OCI-LY7 (cell line): ENCODE measurements at regions of chr11 and their contacts with region 1.

Region 1: GRCh38 chr11:74988541-74989260 is at the start of gene NEU3:
- DNase-seq: peak; percentile 92
- H3K4me3 ChIP-seq: peak within 1 kb of the TSS; percentile 94
- H3K27ac ChIP-seq: peak within 1 kb of the TSS; percentile 86
- H3K4me1 ChIP-seq: peaks cover 44% of the 10 kb centered on the region
- CTCF ChIP-seq: no peak
- total RNA-seq, gene NEU3: 49.4 and 56.3 TPM in 2 replicates

Region 2: DNA sequence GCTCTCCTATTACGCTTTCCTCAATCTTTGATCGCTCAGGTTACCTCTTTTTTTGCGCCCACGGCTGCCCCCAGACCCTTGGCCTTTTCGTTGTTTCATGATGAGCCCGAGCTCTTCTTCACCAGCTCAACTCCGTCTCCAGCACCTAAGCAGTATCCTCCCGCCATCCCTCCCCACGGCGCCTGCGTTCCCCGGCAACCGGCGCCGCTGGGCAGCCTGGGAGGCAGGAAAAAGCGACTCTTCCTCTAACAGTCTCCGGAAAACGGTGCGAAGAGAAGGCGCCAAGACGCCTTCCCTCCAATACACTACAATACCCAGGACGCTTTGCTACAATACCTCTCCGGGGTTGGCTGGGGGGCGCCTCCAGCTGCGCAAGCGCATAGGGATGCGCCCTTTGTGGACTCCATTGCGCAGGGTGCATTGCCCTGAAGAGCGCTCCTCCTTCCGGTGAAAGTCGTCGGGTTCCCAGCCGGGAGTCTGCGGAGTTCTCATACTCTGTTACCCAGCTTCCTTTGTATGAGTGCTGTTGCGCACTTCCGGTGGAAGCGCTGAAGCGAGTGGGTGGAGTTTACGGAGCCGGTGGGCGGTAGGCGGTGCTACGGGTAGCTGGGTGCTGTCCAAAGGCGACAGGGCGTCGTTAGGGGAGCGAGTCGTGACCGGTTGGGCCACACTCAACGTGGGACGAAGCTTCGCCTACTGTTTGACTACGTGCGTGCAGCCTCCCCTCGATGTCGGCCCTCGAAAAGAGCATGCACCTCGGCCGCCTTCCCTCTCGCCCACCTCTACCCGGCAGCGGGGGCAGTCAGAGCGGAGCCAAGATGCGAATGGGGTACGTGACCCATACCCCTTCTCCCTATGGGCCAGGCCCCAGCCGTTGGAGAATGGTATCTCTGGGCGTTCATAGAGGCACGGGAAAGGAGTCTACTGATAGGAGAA is 817.7 kb before region 1 on chr11 and contains the starts of genes C2CD3 and PPME1:
- CTCF ChIA-PET with region 1: interaction called, 10 read pairs
- POLR2A ChIA-PET with region 1: no interaction called
- intact Hi-C with region 1: no loop called
- DNase-seq: peak; percentile 100
- H3K4me3 ChIP-seq: peak within 1 kb of the TSS; percentile 93
- H3K27ac ChIP-seq: peak within 1 kb of the TSS; percentile 75
- H3K4me1 ChIP-seq: peaks cover 30% of the 10 kb centered on the region
- CTCF ChIP-seq: 0 out of 2 replicates have a peak, but pooled peaks have one; percentile 33
- total RNA-seq, gene C2CD3: 24.9 and 29.2 TPM in 2 replicates
- total RNA-seq, gene PPME1: 17.3 and 28.8 TPM in 2 replicates

Region 3: GRCh38 chr11:74748211-74749127 is 240.2 kb before region 1 on chr11 and contains the start of gene RNF169:
- CTCF ChIA-PET with region 1: no interaction called
- POLR2A ChIA-PET with region 1: no interaction called
- intact Hi-C with region 1: no loop called
- DNase-seq: peak; percentile 98
- H3K4me3 ChIP-seq: peak within 1 kb of the TSS; percentile 75
- H3K27ac ChIP-seq: peak within 1 kb of the TSS; percentile 75
- H3K4me1 ChIP-seq: peaks cover 30% of the 10 kb centered on the region
- CTCF ChIP-seq: no peak
- total RNA-seq, gene RNF169: 16.4 and 16.9 TPM in 2 replicates

Region 4: GRCh38 chr11:74870485-74870884 is 118.2 kb before region 1 on chr11:
- CTCF ChIA-PET with region 1: no interaction called
- POLR2A ChIA-PET with region 1: no interaction called
- intact Hi-C with region 1: no loop called
- DNase-seq: peak; percentile 63
- H3K4me3 ChIP-seq: no peak overlapping the region
- H3K27ac ChIP-seq: no peak overlapping the region
- H3K4me1 ChIP-seq: no peaks in the 10 kb centered on the region
- CTCF ChIP-seq: peak; percentile 80

Region 5: DNA sequence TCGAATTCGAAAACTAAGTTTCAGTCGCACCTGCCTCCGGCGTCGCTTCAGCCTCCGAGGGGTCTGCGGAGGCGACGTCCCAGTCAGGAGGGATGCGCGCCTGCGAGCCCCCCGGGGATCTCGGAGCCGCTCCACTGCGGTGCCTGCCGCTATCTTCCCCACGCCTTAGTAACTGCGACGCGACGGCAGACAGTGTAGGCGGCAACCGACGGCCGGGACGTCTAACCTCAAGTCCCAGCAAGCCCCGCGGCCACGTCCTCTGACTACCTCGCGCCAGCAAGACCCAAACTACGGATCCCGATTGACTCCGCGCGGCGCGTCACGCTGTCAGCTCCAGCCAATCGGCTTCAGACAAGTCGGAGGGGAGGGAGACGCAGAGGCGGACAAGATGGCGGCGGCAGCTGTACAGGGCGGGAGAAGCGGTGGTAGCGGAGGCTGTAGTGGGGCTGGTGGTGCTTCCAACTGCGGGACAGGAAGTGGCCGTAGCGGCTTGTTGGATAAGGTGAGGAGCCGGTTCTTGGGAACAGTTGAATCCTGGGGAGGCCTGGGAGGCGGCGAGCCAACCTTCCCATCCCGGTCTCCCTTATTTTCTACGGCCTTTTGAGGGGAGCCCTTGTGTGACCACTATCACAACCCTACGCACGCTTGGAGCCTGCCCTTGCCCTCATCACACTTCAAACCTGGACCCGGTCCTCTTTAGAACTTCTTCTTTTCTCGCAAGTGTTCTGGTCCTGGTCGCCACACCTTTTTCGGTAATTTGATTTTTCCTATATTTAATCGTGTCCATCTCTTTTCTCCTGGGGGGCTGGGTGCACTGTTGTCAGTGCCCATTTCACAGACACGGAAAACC is 39.6 kb before region 1 on chr11 and contains the starts of genes SPCS2 and XRRA1:
- CTCF ChIA-PET with region 1: interaction called, 16 read pairs
- POLR2A ChIA-PET with region 1: interaction called, 21 read pairs
- intact Hi-C with region 1: loop called (anchors 1 kb)
- DNase-seq: peak; percentile 99
- H3K4me3 ChIP-seq: peak within 1 kb of the TSS; percentile 91
- H3K27ac ChIP-seq: peak within 1 kb of the TSS; percentile 74
- H3K4me1 ChIP-seq: peaks cover 42% of the 10 kb centered on the region
- CTCF ChIP-seq: no peak
- total RNA-seq, gene SPCS2: 38.3 and 39.6 TPM in 2 replicates
- total RNA-seq, gene XRRA1: 19.0 and 20.3 TPM in 2 replicates

Region 6: GRCh38 chr11:74978041-74978440 is 10.7 kb before region 1 on chr11:
- CTCF ChIA-PET with region 1: no interaction called
- POLR2A ChIA-PET with region 1: no interaction called
- intact Hi-C with region 1: no loop called
- DNase-seq: no peak
- H3K4me3 ChIP-seq: no peak overlapping the region
- H3K27ac ChIP-seq: no peak overlapping the region
- H3K4me1 ChIP-seq: no peaks in the 10 kb centered on the region
- CTCF ChIP-seq: no peak

Region 7: DNA sequence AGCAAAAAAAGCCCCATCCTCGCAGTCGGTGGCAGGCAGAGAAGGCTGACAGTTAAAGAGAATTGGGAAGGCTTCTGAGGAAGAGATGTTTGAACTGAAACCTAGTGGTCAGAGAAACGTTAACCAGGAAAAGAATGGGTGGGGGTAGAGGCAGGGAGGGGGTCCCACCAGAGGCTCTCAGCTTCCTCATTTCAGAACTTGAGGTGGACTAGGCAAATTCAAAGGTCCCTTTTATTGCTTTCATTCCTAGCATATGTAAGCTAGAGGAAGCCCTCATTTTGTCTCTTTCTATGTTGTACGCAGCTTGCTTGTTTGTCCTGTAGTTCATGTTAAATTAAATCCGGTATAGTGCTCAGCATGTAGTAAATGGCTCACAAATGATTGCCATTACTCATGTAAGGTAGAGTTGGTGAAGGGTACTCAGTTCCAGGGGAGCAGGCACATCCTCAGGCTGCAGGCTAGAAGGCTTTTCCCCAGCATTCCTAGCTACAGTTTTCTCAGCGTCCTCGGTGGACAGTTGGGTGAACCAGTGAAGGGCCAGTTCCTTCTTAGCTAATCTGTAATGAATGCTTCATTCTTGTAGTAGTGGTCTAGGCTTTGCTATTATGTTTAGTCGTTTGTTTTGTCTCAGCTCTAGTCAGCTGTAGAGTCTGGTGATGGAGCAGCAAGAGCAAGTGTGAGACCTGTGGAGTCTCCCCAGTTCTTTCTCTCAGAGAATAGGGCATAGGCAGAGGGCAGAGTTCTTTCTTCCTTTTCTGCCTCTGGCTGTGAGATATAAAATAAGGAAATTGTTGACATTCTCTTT is 884.9 kb after region 1 on chr11:
- CTCF ChIA-PET with region 1: no interaction called
- POLR2A ChIA-PET with region 1: no interaction called
- intact Hi-C with region 1: loop called (anchors 10 kb)
- DNase-seq: peak; percentile 68
- H3K4me3 ChIP-seq: peak overlapping the region; percentile 40
- H3K27ac ChIP-seq: peak overlapping the region; percentile 65
- H3K4me1 ChIP-seq: peaks cover 31% of the 10 kb centered on the region
- CTCF ChIP-seq: no peak